ENCODE measurements at regions of chr5 and their contacts with region 1.

Region 1: DNA sequence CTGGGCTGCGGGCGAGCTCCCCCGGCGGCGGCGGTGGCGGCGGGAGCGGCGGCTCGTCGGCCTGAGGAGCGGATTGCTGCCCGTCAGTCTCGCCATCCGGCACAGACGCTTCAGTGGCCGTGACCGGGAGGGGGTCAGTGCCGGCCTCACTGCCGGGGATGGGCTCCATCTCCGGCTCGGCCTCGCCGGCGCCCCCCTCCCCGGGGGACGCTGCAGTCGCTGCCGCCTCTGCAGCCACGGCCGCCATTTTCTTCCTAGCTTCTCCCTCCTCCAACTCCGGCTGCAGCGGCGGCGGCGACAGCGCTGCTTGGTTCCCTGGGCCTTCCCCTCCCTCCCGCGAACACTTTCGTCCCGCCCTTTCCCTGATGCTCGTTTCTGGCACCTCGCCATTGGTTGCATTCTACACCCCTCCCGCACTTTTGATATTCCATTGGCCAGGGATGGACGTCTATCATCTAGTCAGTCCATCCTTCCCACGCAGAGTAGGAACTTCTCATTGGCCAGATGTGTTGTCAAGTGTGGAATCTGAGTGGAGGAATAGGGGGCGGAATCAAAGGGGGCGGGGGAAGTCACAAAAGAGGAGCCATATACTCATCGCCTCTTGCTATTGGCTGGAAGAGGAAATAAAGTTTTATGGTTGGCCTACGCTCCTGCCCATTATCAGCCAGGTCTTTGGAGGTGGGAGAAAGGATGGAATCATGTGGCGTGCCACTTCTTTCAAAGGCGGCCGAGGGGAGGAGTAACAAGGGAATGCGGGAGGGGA is at the start of gene PWWP2A:
- DNase-seq: peak; percentile 100
- ATAC-seq: peak; percentile 92
- H3K4me3 ChIP-seq: peak within 1 kb of the TSS; percentile 94
- H3K27ac ChIP-seq: peak within 1 kb of the TSS; percentile 87
- H3K4me1 ChIP-seq: no peaks in the 10 kb centered on the region
- H3K27me3 ChIP-seq: no peaks in the 10 kb centered on the region
- CTCF ChIP-seq: 0 out of 2 replicates have a peak, but pooled peaks have one; percentile 9
- POLR2A ChIP-seq: peak; percentile 60; the same call in 1 of the 2 replicates
- RAD21 ChIP-seq: no peak
- total RNA-seq, gene PWWP2A: 12.5 and 14.4 TPM in 2 replicates

Region 2: GRCh38 chr5:160082614-160083500 is 36.5 kb before region 1 on chr5:
- CTCF ChIA-PET with region 1: interaction called, 3 read pairs
- POLR2A ChIA-PET with region 1: no interaction called
- dilution Hi-C with region 1: no loop called
- in situ Hi-C with region 1: no loop called
- intact Hi-C with region 1: loop called (anchors 2 kb)
- DNase-seq: peak; percentile 81
- ATAC-seq: peak; percentile 83
- H3K4me3 ChIP-seq: no peak overlapping the region; the same call in 1 of the 2 replicates
- H3K27ac ChIP-seq: peak overlapping the region; percentile 89
- H3K4me1 ChIP-seq: peaks cover 12% of the 10 kb centered on the region
- H3K27me3 ChIP-seq: no peaks in the 10 kb centered on the region
- CTCF ChIP-seq: no peak
- POLR2A ChIP-seq: no peak
- RAD21 ChIP-seq: no peak

Region 3: DNA sequence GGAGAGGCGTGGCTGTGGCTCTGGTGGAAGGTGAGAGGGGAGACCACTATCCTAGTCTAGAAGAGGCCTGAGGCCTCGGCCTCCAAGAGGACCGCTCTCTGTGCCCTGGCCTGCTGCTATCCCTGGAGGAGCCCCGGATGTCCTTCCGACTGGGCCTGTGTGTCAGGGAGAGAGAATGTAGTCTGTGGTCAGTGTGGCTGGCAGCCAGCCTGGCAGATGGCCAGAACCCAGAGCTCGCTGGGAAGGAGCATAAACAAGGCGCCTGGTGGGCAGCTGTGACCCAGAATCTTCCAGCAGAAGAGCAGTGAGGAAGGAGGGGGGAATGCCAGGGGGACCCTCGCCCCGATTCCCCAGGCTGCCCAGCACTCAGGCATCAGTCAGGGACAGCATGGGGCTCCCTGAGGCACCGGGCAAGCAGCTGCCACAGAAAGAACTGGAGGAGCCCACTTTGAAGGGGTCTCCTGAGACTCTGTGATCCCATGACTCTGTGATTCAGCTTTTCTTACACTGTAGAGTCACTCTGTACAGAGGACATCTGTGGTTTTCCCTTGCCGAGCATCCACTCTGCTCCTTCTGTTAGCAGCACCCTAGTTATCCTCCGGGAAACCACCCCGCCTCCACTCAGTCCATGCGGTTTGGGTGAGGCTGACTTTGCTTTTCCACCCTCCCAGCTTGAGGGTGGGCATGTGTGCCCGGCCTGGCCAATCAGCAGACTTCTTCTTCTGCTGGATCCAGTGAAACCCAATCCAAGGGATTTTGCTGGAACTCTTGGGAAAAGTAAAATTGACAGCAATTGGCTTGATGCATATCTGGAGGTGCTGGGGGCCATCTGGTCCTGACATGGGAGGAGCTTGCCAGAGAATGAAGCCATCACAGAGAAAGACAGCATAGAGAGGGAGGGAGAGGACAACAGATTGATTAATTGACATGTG is 46.1 kb after region 1 on chr5:
- CTCF ChIA-PET with region 1: no interaction called
- POLR2A ChIA-PET with region 1: no interaction called
- dilution Hi-C with region 1: no loop called
- in situ Hi-C with region 1: no loop called
- intact Hi-C with region 1: loop called (anchors 1 kb)
- DNase-seq: peak; percentile 98
- ATAC-seq: peak; percentile 86
- H3K4me3 ChIP-seq: peak overlapping the region; percentile 2; the same call in 1 of the 2 replicates
- H3K27ac ChIP-seq: peak overlapping the region; percentile 97
- H3K4me1 ChIP-seq: peaks cover 20% of the 10 kb centered on the region
- H3K27me3 ChIP-seq: no peaks in the 10 kb centered on the region
- CTCF ChIP-seq: no peak
- POLR2A ChIP-seq: peak; percentile 82
- RAD21 ChIP-seq: peak; percentile 7; the same call in 1 of the 2 replicates

Region 4: DNA sequence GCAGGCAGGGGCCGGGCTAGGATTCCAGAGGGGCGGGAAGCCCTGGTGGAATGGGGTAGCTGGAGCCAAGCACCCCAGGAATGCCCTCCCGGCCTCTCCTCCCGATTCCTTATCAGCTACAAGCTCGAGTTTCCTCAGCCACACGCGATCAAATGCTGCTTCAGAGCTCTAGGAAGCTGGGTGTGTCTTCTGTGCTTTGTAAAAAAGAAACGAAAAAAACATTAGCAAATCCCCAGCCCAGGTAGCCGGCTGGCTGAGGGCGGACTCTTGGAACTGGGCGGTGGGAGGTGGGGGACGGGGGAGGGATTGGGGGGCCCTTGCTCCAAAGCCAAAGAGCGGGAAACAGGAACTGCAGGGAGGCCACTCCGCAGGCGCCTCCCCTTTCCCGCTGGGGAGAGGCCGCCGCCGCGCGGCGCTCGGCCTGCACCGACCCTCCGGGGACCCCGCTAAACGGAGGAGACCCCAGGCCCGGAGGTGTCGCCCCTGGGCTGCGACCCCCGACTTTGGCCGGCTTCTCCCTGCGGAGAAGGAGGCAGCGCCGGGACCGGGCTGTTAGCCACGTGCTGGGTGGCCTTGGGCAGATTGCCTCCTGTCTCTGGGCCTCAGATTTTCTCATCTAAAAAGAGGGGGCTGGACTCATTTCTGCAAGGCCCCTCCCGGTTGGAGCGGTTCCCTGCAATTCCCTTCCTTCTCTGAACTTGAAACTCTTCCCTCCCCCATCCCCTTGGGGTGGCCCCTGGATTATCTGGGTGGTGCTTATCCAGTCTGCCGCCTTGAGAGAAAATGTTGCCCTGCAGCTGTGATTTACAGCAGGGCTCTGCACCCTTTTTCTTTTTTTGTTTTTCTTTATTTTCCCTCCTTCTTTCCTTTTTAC is 69.1 kb after region 1 on chr5:
- CTCF ChIA-PET with region 1: no interaction called
- POLR2A ChIA-PET with region 1: no interaction called
- dilution Hi-C with region 1: no loop called
- in situ Hi-C with region 1: no loop called
- intact Hi-C with region 1: loop called (anchors 1 kb)
- DNase-seq: peak; percentile 82
- ATAC-seq: peak; percentile 83
- H3K4me3 ChIP-seq: peak overlapping the region; percentile 22; the same call in 1 of the 2 replicates
- H3K27ac ChIP-seq: peak overlapping the region; percentile 68
- H3K4me1 ChIP-seq: peaks cover 3% of the 10 kb centered on the region
- H3K27me3 ChIP-seq: no peaks in the 10 kb centered on the region
- CTCF ChIP-seq: 0 out of 2 replicates have a peak, but pooled peaks have one; percentile 10
- POLR2A ChIP-seq: no peak
- RAD21 ChIP-seq: no peak

Region 5: DNA sequence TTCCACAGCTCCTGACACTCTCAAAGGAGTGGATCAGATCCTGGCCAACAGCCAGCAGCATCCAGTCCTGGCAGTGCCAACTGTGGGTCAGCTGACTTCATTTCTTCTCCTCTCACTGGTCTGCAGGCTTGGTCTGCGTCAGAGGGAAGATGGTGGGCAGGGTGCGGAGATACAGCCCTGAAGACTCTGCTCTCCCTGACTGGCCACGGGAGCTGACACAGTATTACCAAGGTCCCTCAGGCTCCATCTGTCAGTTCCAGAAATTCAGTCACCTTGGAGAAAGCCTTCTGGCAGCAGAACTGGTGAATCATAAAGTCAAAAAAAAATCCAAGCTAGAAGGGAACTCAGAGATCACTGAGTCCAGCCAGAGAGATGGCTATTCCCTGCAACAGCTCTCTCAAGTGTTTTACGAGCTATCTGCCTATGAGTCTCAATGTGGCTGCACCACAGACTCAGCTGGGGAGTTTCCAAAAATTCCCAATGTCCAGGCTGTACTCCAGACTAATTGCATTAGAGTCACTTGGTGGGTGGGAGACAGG is 223.1 kb after region 1 on chr5:
- CTCF ChIA-PET with region 1: no interaction called
- POLR2A ChIA-PET with region 1: no interaction called
- dilution Hi-C with region 1: no loop called
- in situ Hi-C with region 1: no loop called
- intact Hi-C with region 1: loop called (anchors 1 kb)
- DNase-seq: peak; percentile 61
- ATAC-seq: no peak
- H3K4me3 ChIP-seq: no peak overlapping the region
- H3K27ac ChIP-seq: no peak overlapping the region
- H3K4me1 ChIP-seq: peaks cover 2% of the 10 kb centered on the region; the same call in 1 of the 2 replicates
- H3K27me3 ChIP-seq: no peaks in the 10 kb centered on the region
- CTCF ChIP-seq: no peak
- POLR2A ChIP-seq: no peak
- RAD21 ChIP-seq: no peak

Measured in IMR-90 (cell line).